HCT116 (cell line): ENCODE measurements at regions of chrX and their contacts with region 1.

Region 1: GRCh38 chrX:43557792-43558191 is 98.3 kb upstream of the MAOA start:
- DNase-seq: peak; percentile 54
- ATAC-seq: no peak
- H3K4me3 ChIP-seq: no peak overlapping the region
- H3K27ac ChIP-seq: no peak overlapping the region
- H3K4me1 ChIP-seq: no peaks in the 10 kb centered on the region
- H3K27me3 ChIP-seq: no peaks in the 10 kb centered on the region
- CTCF ChIP-seq: peak; percentile 52 to 57 (median 54); a peak in 5 of 6 replicates
- POLR2A ChIP-seq: no peak
- RAD21 ChIP-seq: peak; percentile 80

Region 2: DNA sequence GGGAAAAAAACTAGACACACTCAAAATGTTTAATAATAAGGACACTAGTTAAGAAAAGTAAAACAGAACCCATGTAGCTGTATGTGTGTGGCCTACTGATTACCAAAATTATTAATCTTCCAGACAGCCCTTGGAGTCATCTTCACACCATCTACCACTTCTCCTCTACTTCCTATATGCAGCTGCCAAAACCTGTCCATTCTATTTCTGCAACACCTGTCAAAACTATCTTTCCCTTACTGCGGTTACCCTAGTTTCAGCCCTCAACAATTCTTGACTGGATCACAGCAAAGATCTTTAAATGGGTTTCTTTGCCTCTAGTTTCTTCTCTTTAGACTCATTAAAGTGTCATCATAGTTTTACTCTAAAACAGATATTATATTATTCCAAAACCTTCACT is 1761.2 kb before region 1 on chrX:
- CTCF ChIA-PET with region 1: interaction called, 4 read pairs
- POLR2A ChIA-PET with region 1: no interaction called
- RAD21 ChIA-PET with region 1: no interaction called
- intact Hi-C with region 1: loop called (anchors 10 kb)
- DNase-seq: no peak
- ATAC-seq: no peak
- H3K4me3 ChIP-seq: no peak overlapping the region
- H3K27ac ChIP-seq: no peak overlapping the region
- H3K4me1 ChIP-seq: no peaks in the 10 kb centered on the region
- H3K27me3 ChIP-seq: no peaks in the 10 kb centered on the region
- CTCF ChIP-seq: no peak
- POLR2A ChIP-seq: no peak
- RAD21 ChIP-seq: no peak

Region 3: GRCh38 chrX:42678125-42678524 is 879.7 kb before region 1 on chrX:
- CTCF ChIA-PET with region 1: no interaction called
- POLR2A ChIA-PET with region 1: no interaction called
- RAD21 ChIA-PET with region 1: no interaction called
- intact Hi-C with region 1: loop called (anchors 5 kb)
- DNase-seq: no peak
- ATAC-seq: peak; percentile 40; the same call in 1 of the 2 replicates
- H3K4me3 ChIP-seq: no peak overlapping the region
- H3K27ac ChIP-seq: no peak overlapping the region
- H3K4me1 ChIP-seq: no peaks in the 10 kb centered on the region
- H3K27me3 ChIP-seq: no peaks in the 10 kb centered on the region
- CTCF ChIP-seq: peak in 2 of 3 experiments; percentile 19 to 20; a peak in 1 of 6 replicates
- POLR2A ChIP-seq: no peak
- RAD21 ChIP-seq: peak; percentile 41; the same call in 1 of the 2 replicates

Region 4: GRCh38 chrX:43016021-43016420 is 541.8 kb before region 1 on chrX:
- CTCF ChIA-PET with region 1: no interaction called
- POLR2A ChIA-PET with region 1: no interaction called
- RAD21 ChIA-PET with region 1: no interaction called
- intact Hi-C with region 1: no loop called
- DNase-seq: no peak
- ATAC-seq: no peak
- H3K4me3 ChIP-seq: no peak overlapping the region
- H3K27ac ChIP-seq: no peak overlapping the region
- H3K4me1 ChIP-seq: no peaks in the 10 kb centered on the region
- H3K27me3 ChIP-seq: no peaks in the 10 kb centered on the region
- CTCF ChIP-seq: no peak
- POLR2A ChIP-seq: no peak
- RAD21 ChIP-seq: no peak

Region 5: GRCh38 chrX:43349363-43349762 is 208.4 kb before region 1 on chrX:
- CTCF ChIA-PET with region 1: interaction called, 22 read pairs
- POLR2A ChIA-PET with region 1: no interaction called
- RAD21 ChIA-PET with region 1: interaction called, 3 to 7 read pairs
- intact Hi-C with region 1: loop called (anchors 2 kb)
- DNase-seq: peak; percentile 28
- ATAC-seq: peak; percentile 81
- H3K4me3 ChIP-seq: no peak overlapping the region
- H3K27ac ChIP-seq: no peak overlapping the region
- H3K4me1 ChIP-seq: no peaks in the 10 kb centered on the region
- H3K27me3 ChIP-seq: no peaks in the 10 kb centered on the region
- CTCF ChIP-seq: peak; percentile 33 to 69 (median 64); a peak in 5 of 6 replicates
- POLR2A ChIP-seq: no peak
- RAD21 ChIP-seq: peak; percentile 58

Region 6: GRCh38 chrX:43540318-43540717 is 17.5 kb before region 1 on chrX:
- CTCF ChIA-PET with region 1: no interaction called
- POLR2A ChIA-PET with region 1: no interaction called
- RAD21 ChIA-PET with region 1: no interaction called
- intact Hi-C with region 1: no loop called
- DNase-seq: no peak
- ATAC-seq: no peak
- H3K4me3 ChIP-seq: no peak overlapping the region
- H3K27ac ChIP-seq: no peak overlapping the region
- H3K4me1 ChIP-seq: no peaks in the 10 kb centered on the region
- H3K27me3 ChIP-seq: no peaks in the 10 kb centered on the region
- CTCF ChIP-seq: no peak
- POLR2A ChIP-seq: no peak
- RAD21 ChIP-seq: no peak

Region 7: DNA sequence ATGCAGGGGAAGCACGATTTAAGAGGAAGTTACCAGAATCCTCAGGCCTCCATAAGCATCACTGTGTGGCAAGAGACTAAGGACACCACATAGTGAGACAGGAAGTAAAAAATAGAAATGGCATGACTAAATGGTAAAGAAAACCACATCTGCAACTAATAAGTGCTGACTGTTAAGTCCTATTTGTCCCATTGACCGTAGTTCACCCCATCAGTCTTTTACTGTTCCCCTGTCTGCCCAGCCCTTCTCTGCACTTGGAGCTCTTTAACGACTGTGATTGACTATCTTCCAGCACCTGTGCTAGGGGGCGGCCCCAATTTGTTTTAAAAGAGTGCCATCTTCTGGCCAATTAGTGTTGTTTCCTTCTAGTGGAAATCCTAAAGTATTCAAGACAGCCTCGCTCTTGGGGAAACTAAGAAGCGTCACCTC is 192.5 kb after region 1 on chrX:
- CTCF ChIA-PET with region 1: interaction called, 40 read pairs
- POLR2A ChIA-PET with region 1: no interaction called
- RAD21 ChIA-PET with region 1: interaction called in 1 of 2 experiments, 4 read pairs
- intact Hi-C with region 1: loop called (anchors 1 kb)
- DNase-seq: peak; percentile 31
- ATAC-seq: peak; percentile 86
- H3K4me3 ChIP-seq: no peak overlapping the region
- H3K27ac ChIP-seq: no peak overlapping the region
- H3K4me1 ChIP-seq: no peaks in the 10 kb centered on the region
- H3K27me3 ChIP-seq: no peaks in the 10 kb centered on the region
- CTCF ChIP-seq: peak; percentile 25 to 70 (median 55); a peak in 3 of 6 replicates
- POLR2A ChIP-seq: no peak
- RAD21 ChIP-seq: peak; percentile 81

Region 8: GRCh38 chrX:43939187-43939926 is 381.6 kb after region 1 on chrX:
- CTCF ChIA-PET with region 1: interaction called, 4 read pairs
- POLR2A ChIA-PET with region 1: no interaction called
- RAD21 ChIA-PET with region 1: no interaction called
- intact Hi-C with region 1: loop called (anchors 2 kb)
- DNase-seq: no peak
- ATAC-seq: no peak
- H3K4me3 ChIP-seq: no peak overlapping the region
- H3K27ac ChIP-seq: no peak overlapping the region
- H3K4me1 ChIP-seq: no peaks in the 10 kb centered on the region
- H3K27me3 ChIP-seq: no peaks in the 10 kb centered on the region
- CTCF ChIP-seq: peak in 2 of 3 experiments; percentile 34 to 38; a peak in 3 of 6 replicates
- POLR2A ChIP-seq: no peak
- RAD21 ChIP-seq: peak; percentile 60